ENCODE measurements at regions of chr12 and their contacts with region 1.

Region 1: GRCh38 chr12:4148418-4149056 is 125.0 kb upstream of the CCND2 start:
- DNase-seq: peak; percentile 75
- ATAC-seq: no peak
- H3K4me3 Mint-ChIP-seq: no peak overlapping the region
- H3K27ac Mint-ChIP-seq: peak overlapping the region; percentile 94
- H3K4me1 Mint-ChIP-seq: peaks cover 87% of the 10 kb centered on the region
- H3K27me3 Mint-ChIP-seq: no peaks in the 10 kb centered on the region

Region 2: DNA sequence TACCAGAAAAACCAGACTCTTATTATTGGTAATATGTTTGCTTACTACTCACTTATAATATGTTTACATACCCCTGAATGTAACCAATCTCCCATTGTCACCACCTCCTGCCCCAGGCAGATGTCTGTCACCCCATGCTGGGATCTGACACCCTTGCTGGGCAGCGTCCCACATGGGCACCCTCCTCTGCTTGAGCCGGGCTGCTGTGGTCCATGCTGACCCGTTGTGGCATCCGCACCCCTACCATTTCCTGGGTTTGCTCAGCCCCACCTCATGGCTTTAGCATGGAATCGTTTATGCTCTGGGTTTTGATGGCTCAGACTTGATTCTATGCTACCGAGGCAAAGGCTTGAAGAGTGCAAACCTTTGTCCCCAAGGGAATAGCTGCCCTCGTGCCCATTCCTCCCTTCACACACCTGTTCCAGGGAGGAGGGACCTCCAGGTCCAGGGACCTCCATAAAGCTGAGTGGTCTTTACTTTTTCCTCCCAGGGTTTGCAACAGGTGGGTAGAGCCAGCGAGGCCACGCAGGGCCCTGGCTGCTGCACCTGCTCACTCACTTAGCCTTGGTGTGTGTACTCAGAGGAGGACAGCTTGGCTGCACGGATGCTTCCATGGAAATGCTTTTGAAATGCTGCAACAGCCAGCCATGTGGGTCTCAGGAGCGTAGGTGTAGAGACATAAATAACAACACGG is 588.8 kb before region 1 on chr12:
- CTCF ChIA-PET with region 1: no interaction called
- POLR2A ChIA-PET with region 1: no interaction called
- intact Hi-C with region 1: no loop called
- DNase-seq: no peak
- ATAC-seq: no peak
- H3K4me3 Mint-ChIP-seq: no peak overlapping the region
- H3K27ac Mint-ChIP-seq: no peak overlapping the region
- H3K4me1 Mint-ChIP-seq: no peaks in the 10 kb centered on the region
- H3K27me3 Mint-ChIP-seq: peaks cover 21% of the 10 kb centered on the region

Region 3: DNA sequence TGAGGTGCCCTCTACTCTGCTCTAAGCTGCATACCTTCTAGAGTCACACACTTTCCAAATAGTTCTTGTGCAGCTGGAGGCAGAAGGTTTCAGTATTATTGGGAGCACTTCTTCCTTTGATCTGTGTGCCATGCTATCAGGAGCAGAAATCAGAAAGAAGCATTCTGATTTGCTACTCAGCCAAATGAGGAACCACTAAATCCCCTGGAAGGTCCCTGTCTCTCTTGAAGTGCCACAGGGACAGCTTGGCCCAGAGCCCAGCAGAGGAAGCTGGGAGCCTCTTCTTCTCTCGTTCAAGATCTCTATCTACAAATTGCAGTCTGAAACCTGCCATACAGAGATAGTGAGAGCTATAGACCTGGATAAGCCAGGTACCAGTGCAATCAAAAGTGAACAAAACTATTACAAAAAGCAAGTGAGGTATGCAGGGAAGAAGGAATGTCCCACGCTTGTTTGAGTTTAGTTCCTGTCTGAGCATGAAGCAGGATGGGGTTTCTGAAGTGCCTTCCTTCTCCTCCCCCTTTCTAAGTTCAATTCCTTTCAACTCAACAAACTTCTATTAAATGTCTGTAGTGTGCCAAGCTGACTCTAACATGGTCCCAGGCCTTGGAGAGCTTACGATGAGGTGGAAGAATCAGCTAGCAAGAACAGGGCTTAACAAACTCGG is 174.4 kb before region 1 on chr12:
- CTCF ChIA-PET with region 1: interaction called, 3 read pairs
- POLR2A ChIA-PET with region 1: no interaction called
- intact Hi-C with region 1: loop called (anchors 1 to 5 kb)
- DNase-seq: peak; percentile 40
- ATAC-seq: peak; percentile 69
- H3K4me3 Mint-ChIP-seq: peak overlapping the region; percentile 25
- H3K27ac Mint-ChIP-seq: peak overlapping the region; percentile 76
- H3K4me1 Mint-ChIP-seq: peaks cover 66% of the 10 kb centered on the region
- H3K27me3 Mint-ChIP-seq: no peaks in the 10 kb centered on the region

Region 4: DNA sequence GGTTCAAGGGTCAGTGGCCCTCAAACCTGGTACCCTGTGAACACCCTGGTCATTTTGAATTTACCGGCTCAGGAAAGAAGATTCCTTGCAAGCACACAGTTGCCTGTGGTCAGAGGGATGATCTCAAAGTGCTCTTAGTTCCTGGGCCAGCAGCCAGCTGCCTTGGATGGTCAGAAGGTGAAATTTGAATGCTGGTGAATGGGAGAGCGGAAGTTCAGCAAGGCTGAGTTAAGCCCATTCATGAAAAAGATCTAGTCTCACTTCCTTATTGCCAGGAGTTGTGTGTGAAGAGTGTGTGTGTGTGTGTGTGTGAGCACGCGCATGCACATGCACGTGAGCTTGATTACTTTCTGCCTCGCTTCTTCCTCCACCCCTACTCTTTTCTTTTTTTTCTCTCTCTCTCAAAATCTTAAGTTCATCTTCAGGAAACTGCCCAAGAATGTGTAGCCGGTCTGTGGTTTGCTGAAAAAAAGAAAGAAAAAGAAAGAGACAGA is 30.5 kb before region 1 on chr12:
- CTCF ChIA-PET with region 1: interaction called, 31 read pairs
- POLR2A ChIA-PET with region 1: interaction called, 3 read pairs
- intact Hi-C with region 1: loop called (anchors 1 kb)
- DNase-seq: no peak
- ATAC-seq: no peak
- H3K4me3 Mint-ChIP-seq: peak overlapping the region; percentile 38
- H3K27ac Mint-ChIP-seq: peak overlapping the region; percentile 86
- H3K4me1 Mint-ChIP-seq: peaks cover 63% of the 10 kb centered on the region
- H3K27me3 Mint-ChIP-seq: peaks cover 3% of the 10 kb centered on the region

Region 5: DNA sequence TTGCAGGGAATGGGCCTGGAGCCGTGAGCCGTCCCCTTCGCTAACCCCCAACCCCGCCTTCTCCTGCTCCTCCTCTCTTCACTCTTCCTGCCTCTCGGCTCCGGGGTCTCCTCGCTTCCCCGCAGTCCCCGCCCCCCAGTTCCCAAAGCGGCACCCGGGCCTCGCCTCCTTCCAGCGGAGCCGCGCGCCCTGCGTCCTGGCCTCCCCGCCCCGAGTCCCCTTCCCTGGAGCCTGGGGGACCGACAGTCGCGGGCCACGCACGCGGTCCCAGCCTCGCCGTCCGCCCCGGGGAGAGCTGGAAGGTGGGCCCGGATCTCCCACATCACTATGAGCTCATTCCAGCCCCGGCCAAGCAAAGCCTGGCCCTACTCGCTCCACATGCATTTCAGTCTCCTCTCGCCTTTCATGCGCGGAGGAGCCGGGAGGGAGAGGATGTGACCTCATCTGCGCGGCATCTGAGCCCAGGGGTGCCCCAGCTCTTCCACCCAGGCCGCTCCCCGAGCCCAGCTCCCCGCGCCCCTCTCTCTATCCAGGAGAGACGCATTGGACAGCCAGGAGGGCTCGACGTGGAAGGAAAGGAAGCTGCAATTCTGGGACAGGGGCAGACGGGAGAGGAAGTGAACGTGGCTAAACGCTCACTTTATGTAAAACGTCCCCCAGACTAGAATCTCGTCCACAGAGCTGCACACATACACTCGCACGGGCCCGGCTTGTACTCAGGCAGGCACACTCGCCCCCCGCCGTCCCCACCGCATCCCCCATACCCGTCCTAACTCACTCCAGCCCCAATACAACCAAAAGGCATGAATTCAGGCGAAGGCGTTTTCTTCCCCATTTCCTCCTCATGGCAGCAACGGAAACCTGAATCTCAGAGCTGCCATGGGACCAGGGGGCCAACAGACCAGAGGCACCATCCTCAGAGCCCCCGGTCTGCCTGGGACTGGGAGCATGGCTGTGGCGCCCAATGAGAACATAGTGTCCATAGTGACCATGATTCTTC is 16.3 kb after region 1 on chr12:
- CTCF ChIA-PET with region 1: interaction called, 7 read pairs
- POLR2A ChIA-PET with region 1: interaction called, 11 read pairs
- intact Hi-C with region 1: loop called in 1 of 2 experiments (anchors 1 kb)
- DNase-seq: peak; percentile 82
- ATAC-seq: peak; percentile 85
- H3K4me3 Mint-ChIP-seq: peak overlapping the region; percentile 75
- H3K27ac Mint-ChIP-seq: peak overlapping the region; percentile 88
- H3K4me1 Mint-ChIP-seq: peaks cover 50% of the 10 kb centered on the region
- H3K27me3 Mint-ChIP-seq: no peaks in the 10 kb centered on the region

Region 6: DNA sequence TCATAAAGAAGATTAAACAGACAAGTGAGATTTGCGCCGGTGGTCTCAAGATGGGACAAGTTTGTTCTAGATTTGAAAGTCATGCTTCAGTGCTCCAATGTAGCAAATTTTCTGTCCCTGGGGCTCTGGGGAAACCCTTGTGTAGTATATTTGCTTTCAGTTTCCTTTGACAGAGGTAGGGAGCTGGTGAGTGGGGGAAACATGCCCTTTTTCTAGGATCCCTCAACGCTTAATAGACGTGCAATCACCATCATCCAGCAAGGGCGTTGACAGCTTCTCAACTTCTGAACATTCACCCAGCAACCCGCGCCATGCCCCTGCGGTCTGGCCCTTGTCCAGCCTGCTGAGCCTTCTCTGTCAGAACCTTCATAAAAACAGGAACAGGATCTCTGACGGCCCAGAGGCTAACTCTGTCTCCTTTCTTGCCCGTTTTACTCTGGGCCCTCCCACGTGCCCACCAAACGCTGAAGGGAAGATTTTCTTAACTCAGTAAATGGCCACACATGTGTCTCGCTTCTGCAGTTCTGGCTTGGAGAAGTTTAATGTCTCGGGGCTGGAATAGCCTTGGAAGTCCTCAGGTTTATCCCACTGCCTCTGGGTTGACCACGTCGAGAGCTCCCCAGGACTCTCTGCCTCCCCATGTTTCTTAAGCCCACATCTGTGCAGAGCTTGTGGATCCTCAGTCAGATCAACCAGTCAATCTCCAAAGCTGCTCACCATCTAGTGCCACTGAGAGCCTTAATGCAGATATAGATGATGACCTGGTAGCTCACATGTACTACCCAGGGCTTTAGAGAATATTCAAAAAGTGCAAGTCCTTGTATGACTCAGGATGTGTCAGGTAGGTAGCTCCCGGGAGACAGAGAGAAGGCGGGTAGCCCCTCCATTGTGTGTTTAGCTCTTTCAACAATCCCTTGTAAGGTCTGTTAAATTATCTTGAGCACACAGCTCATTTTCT is 67.0 kb after region 1 on chr12:
- CTCF ChIA-PET with region 1: interaction called, 3 read pairs
- POLR2A ChIA-PET with region 1: interaction called, 4 read pairs
- intact Hi-C with region 1: loop called in 1 of 2 experiments (anchors 1 kb)
- DNase-seq: peak; percentile 63
- ATAC-seq: peak; percentile 91
- H3K4me3 Mint-ChIP-seq: peak overlapping the region; percentile 43
- H3K27ac Mint-ChIP-seq: peak overlapping the region; percentile 84
- H3K4me1 Mint-ChIP-seq: peaks cover 29% of the 10 kb centered on the region
- H3K27me3 Mint-ChIP-seq: no peaks in the 10 kb centered on the region

Region 7: GRCh38 chr12:4506870-4507269 is 358.3 kb after region 1 on chr12:
- CTCF ChIA-PET with region 1: no interaction called
- POLR2A ChIA-PET with region 1: no interaction called
- intact Hi-C with region 1: loop called in 1 of 2 experiments (anchors 10 kb)
- DNase-seq: peak; percentile 21
- ATAC-seq: peak; percentile 99
- H3K4me3 Mint-ChIP-seq: peak overlapping the region; percentile 41
- H3K27ac Mint-ChIP-seq: peak overlapping the region; percentile 69
- H3K4me1 Mint-ChIP-seq: peaks cover 29% of the 10 kb centered on the region
- H3K27me3 Mint-ChIP-seq: no peaks in the 10 kb centered on the region

Measured in activated CD4-positive, alpha-beta T cell treated with anti-CD3 and anti-CD28 coated beads for 36 hours (primary cell).